Mammary epithelial cell (primary cell): ENCODE measurements at regions of chrX and their contacts with region 1.

Region 1: DNA sequence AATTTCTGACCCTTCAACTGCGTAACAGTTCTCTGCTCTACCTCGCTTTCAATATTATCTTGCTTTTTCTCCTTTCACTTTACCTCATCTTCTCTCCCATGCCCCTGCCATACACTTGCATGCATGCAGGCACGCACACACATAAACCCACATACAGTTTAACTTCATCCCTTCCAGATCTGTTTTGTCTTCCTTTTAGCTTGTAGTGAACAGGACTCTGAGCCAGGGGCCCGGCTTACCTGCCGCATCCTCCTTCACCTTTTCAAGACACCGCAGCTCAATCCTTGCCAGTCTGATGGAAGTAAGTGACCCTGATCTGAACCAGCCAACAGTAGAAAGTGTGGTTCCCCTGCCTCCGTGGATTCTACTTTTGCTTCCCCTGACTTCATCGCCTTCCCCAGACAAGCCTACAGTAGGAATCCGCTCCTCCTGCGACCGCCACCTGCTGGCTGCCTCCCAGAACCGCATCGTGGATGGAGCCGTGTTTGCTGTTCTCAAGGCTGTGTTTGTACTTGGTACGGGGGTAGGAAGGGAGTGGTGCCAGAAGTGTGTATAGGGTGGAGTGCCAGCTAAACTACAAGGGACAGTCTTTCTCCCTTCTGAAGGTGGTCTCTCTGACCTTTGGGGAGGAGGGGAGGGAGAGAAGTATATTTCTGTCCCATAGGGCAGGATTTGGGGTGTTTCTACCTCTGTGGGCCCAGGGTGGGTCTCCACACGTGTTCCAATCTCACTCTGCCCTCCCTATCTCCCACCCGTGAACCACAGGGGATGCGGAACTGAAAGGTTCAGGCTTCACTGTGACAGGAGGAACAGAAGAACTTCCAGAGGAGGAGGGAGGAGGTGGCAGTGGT is 10.7 kb downstream of the MED12 start:
- DNase-seq: peak; percentile 31
- H3K4me3 ChIP-seq: no peak overlapping the region
- H3K27ac ChIP-seq: no peak overlapping the region
- H3K4me1 ChIP-seq: no peaks in the 10 kb centered on the region
- H3K27me3 ChIP-seq: no peaks in the 10 kb centered on the region
- CTCF ChIP-seq: peak; percentile 77 to 81

Region 2: DNA sequence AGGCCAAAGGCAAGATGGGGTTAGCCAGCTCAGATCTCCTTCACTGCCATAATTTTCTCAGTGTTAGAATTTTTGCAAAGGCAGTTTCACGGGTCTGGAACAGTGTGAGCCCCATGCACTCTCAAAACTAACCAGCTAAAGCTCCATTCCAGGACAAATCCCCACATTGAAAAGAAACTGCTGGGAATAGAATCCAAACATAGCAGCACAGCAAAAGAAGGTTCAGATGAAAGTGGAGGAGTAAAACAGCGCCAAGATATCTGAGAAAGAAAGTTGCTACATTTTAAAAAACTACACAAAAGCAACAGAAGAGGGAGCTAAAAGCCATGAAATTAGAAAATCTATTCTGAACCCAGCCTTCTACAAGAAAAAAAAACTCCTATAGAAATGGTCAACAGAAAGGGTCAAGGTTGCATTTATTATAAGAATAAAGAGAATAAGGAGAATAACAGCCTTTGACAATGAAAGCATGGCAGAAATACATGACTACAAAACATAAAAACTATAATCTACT is 158.6 kb before region 1 on chrX:
- CTCF ChIA-PET with region 1: no interaction called
- dilution Hi-C with region 1: no loop called
- in situ Hi-C with region 1: no loop called
- intact Hi-C with region 1: loop called (anchors 1 kb)
- DNase-seq: peak; percentile 7
- H3K4me3 ChIP-seq: no peak overlapping the region
- H3K27ac ChIP-seq: no peak overlapping the region
- H3K4me1 ChIP-seq: no peaks in the 10 kb centered on the region
- H3K27me3 ChIP-seq: no peaks in the 10 kb centered on the region
- CTCF ChIP-seq: peak; percentile 28 to 29

Region 3: DNA sequence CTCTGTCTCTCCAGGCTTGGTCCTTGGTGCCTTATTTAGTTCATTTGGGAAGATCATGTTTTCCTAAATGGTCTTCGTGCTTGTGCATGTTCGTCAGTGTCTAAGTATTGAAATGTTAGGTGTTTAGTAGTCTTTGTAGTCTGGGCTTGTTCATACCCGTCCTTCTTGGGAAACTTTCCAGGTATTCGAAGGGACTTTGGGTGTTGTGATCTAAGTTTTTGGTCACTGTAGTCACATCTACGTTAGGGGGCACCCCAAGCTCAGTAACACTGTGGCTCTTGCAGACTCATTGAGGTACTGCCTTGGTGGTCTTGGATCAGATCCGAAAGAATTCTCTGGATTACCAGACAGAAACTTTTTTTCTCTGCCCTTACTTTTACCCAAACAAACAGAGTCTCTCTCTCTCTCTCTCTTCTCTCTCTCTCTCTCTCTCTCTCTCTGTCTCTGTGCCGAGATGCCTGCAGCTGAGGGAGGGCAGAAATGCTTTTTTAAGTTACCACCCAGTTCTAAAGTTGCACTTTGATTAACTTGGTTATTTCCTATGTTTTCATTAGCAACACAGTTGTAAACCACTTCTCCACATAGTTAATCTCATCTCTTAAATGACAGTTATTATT is 130.6 kb before region 1 on chrX:
- CTCF ChIA-PET with region 1: no interaction called
- dilution Hi-C with region 1: no loop called
- in situ Hi-C with region 1: no loop called
- intact Hi-C with region 1: loop called (anchors 1 kb)
- DNase-seq: peak; percentile 84
- H3K4me3 ChIP-seq: no peak overlapping the region
- H3K27ac ChIP-seq: no peak overlapping the region
- H3K4me1 ChIP-seq: no peaks in the 10 kb centered on the region
- H3K27me3 ChIP-seq: no peaks in the 10 kb centered on the region
- CTCF ChIP-seq: peak; percentile 21 to 48

Region 4: DNA sequence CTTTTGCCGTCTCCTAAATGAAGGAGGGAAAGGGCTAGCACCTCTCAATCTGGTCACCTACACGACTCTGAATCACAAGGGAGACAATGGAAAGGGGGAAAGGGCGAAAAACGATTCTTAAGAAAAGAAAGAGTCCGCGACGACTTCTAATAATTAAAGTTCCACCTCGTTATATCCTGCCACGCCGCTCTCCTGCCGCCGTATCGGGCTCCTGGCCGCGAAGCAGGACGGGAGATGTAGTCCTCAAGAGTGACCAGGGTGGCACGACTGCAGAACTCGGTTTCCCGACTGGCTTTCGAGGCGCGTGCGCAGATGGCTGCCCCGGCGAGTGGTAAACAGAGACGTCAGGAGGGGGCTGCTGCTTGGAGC is 33.6 kb before region 1 on chrX and contains the start of gene FOXO4:
- CTCF ChIA-PET with region 1: no interaction called
- dilution Hi-C with region 1: no loop called
- in situ Hi-C with region 1: no loop called
- intact Hi-C with region 1: loop called (anchors 1 kb)
- DNase-seq: peak; percentile 69
- H3K4me3 ChIP-seq: peak within 1 kb of the TSS; percentile 40 to 59 (median 57)
- H3K27ac ChIP-seq: no peak within 1 kb of the TSS
- H3K4me1 ChIP-seq: peaks cover 5% of the 10 kb centered on the region
- H3K27me3 ChIP-seq: no peaks in the 10 kb centered on the region
- CTCF ChIP-seq: no peak
- total RNA-seq, gene FOXO4: 5.9 to 13.8 TPM

Region 5: GRCh38 chrX:71198066-71198465 is 68.9 kb after region 1 on chrX:
- CTCF ChIA-PET with region 1: no interaction called
- dilution Hi-C with region 1: loop called (anchors 5 kb)
- in situ Hi-C with region 1: no loop called
- intact Hi-C with region 1: no loop called
- DNase-seq: no peak
- H3K4me3 ChIP-seq: no peak overlapping the region
- H3K27ac ChIP-seq: no peak overlapping the region
- H3K4me1 ChIP-seq: no peaks in the 10 kb centered on the region
- H3K27me3 ChIP-seq: no peaks in the 10 kb centered on the region
- CTCF ChIP-seq: no peak